ENCODE measurements at regions of chr5 and their contacts with region 1.

Region 1: GRCh38 chr5:132007399-132008165 is 3.9 kb downstream of the ACSL6 start:
- DNase-seq: peak; percentile 62 to 71 (median 66)
- H3K4me3 ChIP-seq: no peak overlapping the region
- H3K4me3 Mint-ChIP-seq: peak overlapping the region in 1 of 8 donors; percentile 53
- H3K27ac ChIP-seq: no peak overlapping the region
- H3K27ac Mint-ChIP-seq: peak overlapping the region in 5 of 7 donors; percentile 6 to 83 (median 32)
- H3K4me1 ChIP-seq: peaks cover 32% of the 10 kb centered on the region
- H3K4me1 Mint-ChIP-seq: peaks cover 21 to 53% (median 37%) of the 10 kb centered on the region in 4 donors
- H3K27me3 ChIP-seq: no peaks in the 10 kb centered on the region
- H3K27me3 Mint-ChIP-seq: peaks cover 0 to 4% of the 10 kb centered on the region in 2 donors

Region 2: GRCh38 chr5:131423056-131423455 is 584.5 kb before region 1 on chr5:
- CTCF ChIA-PET with region 1: interaction called, 5 read pairs
- POLR2A ChIA-PET with region 1: no interaction called
- intact Hi-C with region 1: loop called (anchors 1 kb)
- DNase-seq: no peak
- H3K4me3 ChIP-seq: no peak overlapping the region
- H3K4me3 Mint-ChIP-seq: no peak overlapping the region
- H3K27ac ChIP-seq: no peak overlapping the region
- H3K27ac Mint-ChIP-seq: peak overlapping the region in 6 of 7 donors; percentile 15 to 85 (median 60)
- H3K4me1 ChIP-seq: peaks cover 6% of the 10 kb centered on the region
- H3K4me1 Mint-ChIP-seq: peaks cover 9 to 18% (median 11%) of the 10 kb centered on the region in 4 donors
- H3K27me3 ChIP-seq: no peaks in the 10 kb centered on the region
- H3K27me3 Mint-ChIP-seq: no peaks in the 10 kb centered on the region

Region 3: DNA sequence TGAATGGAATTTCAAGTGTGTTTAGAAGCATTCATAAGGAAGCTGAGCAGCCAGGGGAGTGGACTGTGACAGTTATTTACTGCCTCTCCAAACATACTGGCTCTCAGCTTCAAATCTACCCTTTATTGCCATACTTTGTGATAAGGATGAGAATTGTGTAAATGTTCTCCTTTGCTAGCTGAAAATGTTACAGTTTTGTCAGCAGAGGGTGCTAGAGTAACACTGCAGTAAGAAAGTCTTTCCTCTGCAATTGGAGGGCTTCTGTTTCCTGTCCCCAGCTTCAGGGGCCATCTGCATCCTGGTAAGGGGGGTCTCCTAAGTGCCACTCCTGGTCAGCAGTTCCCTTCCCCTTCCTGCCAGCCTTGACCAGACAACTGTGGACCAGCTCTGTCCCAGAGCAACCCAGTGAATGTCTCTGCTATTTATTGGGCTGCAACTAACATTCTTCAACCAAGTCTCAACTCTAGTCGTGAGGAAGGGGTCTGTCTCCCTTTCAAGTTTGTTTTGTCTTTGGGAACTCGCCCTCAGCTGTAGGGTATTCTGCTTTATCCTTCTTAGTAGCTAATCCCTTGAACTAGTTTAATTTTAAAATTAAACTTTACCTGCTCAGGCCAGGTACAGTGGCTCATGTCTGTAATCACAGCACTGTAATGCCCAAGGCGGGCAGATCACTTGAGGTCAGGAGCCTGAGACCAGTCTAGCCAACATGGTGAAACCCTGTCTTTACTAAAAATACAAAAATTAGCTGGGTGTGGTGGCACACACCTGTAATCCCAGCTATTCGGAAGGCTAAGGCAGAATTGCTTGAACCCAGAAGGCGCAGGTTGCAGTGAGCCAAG is 417.9 kb before region 1 on chr5:
- CTCF ChIA-PET with region 1: interaction called, 394 read pairs
- POLR2A ChIA-PET with region 1: interaction called, 31 read pairs
- intact Hi-C with region 1: loop called (anchors 1 kb)
- DNase-seq: peak in 4 of 5 donors; percentile 56 to 60 (median 58)
- H3K4me3 ChIP-seq: no peak overlapping the region
- H3K4me3 Mint-ChIP-seq: no peak overlapping the region
- H3K27ac ChIP-seq: no peak overlapping the region
- H3K27ac Mint-ChIP-seq: peak overlapping the region in 4 of 7 donors; percentile 22 to 77 (median 52)
- H3K4me1 ChIP-seq: peaks cover 17% of the 10 kb centered on the region
- H3K4me1 Mint-ChIP-seq: peaks cover 21 to 58% (median 32%) of the 10 kb centered on the region in 4 donors
- H3K27me3 ChIP-seq: no peaks in the 10 kb centered on the region
- H3K27me3 Mint-ChIP-seq: no peaks in the 10 kb centered on the region

Region 4: DNA sequence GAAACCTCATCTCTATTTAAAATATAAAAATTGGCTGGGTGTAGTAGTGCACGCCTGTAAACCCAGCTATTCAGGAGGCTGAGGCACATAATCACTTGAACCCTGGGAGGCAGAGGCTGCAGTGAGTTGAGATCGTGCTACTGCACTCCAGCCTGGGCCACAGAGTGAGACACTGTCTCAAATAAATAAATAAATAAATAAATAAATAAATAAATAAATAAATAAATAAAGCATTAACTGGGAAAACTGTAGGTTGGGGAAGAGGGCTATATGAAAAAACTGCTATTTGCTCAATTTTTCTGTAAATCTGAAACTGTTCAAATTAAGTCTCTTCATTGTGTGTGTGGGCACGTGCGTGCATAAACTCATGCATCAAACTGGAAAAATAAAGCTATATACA is 312.7 kb before region 1 on chr5:
- CTCF ChIA-PET with region 1: interaction called, 15 read pairs
- POLR2A ChIA-PET with region 1: no interaction called
- intact Hi-C with region 1: no loop called
- DNase-seq: no peak
- H3K4me3 ChIP-seq: no peak overlapping the region
- H3K4me3 Mint-ChIP-seq: no peak overlapping the region
- H3K27ac ChIP-seq: no peak overlapping the region
- H3K27ac Mint-ChIP-seq: no peak overlapping the region
- H3K4me1 ChIP-seq: no peaks in the 10 kb centered on the region
- H3K4me1 Mint-ChIP-seq: peaks cover 0 to 5% (median 2%) of the 10 kb centered on the region in 4 donors
- H3K27me3 ChIP-seq: no peaks in the 10 kb centered on the region
- H3K27me3 Mint-ChIP-seq: no peaks in the 10 kb centered on the region

Region 5: DNA sequence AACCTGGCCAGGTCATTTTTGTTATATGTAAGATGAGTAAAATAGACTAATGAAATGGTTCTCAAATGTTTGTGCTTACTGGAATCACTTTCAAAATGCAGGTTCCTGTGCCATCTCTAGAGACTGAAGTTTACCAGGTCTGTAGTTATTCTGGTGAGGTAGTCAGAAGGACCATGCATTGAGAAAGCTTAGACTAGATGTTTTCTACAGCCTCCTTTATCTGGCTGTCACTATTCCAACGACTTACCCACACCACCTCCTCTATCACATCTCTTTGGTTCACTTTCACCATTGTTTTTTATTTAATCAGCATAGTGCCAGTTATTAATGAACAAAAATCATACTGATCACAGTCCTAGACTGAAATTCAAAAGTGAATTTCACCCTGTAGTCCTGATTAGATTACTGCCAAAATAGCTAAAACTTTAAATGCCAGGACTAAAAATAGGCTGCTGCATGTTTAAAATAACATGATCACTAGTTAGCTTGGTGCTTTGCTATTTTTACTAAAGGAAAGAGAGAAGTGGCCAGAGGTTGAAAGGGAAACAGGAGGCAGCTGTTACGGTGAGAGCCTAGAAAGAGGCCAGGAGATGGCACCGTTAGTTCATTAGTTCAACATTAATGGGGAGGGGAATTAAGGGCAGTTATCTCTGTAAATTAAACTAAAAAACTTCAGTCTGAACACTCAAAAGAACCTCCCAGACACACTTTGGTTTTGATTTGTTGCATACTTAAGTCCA is 196.9 kb before region 1 on chr5:
- CTCF ChIA-PET with region 1: interaction called, 67 read pairs
- POLR2A ChIA-PET with region 1: no interaction called
- intact Hi-C with region 1: loop called (anchors 1 kb)
- DNase-seq: peak in 4 of 5 donors; percentile 16 to 27 (median 22)
- H3K4me3 ChIP-seq: no peak overlapping the region
- H3K4me3 Mint-ChIP-seq: no peak overlapping the region
- H3K27ac ChIP-seq: no peak overlapping the region
- H3K27ac Mint-ChIP-seq: peak overlapping the region in 1 of 7 donors; percentile 33
- H3K4me1 ChIP-seq: no peaks in the 10 kb centered on the region
- H3K4me1 Mint-ChIP-seq: peaks cover 0 to 4% (median 0%) of the 10 kb centered on the region in 4 donors
- H3K27me3 ChIP-seq: no peaks in the 10 kb centered on the region
- H3K27me3 Mint-ChIP-seq: no peaks in the 10 kb centered on the region

Region 6: DNA sequence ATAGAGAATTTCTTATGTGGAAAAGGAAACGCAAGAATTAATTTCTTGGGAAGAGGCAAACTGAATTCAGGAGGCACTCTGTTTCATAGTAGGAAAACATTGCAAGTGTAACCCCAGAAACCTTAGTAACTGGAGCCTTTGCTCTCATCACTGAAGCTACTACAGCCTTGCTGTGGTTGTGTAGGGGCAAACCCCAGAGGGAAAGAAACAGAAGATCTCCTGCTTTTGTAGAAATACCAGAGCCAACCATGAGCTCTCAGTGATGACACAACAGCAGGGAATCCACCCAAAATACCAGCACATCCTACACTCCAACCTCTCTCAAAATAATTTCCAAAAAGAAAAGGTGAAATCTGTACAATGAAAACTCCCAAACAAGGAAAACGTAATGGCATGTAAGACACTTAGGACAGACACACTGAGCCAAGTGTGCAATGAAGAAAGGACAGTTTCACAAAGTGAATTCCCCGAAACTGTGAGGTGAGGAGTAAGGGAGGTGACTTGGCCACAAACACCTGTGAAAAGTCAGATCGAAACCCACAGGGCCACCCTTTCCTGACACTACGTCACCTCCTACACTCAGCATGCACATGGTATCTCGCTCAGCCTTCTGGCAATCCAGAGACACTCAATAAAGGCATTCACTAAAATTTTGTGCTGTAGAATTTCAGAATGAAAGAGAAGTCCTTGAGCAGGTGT is 12.4 kb after region 1 on chr5:
- CTCF ChIA-PET with region 1: interaction called, 19 read pairs
- POLR2A ChIA-PET with region 1: interaction called, 3 read pairs
- intact Hi-C with region 1: no loop called
- DNase-seq: peak; percentile 80 to 92 (median 82)
- H3K4me3 ChIP-seq: no peak overlapping the region
- H3K4me3 Mint-ChIP-seq: peak overlapping the region; percentile 4 to 77 (median 74)
- H3K27ac ChIP-seq: peak overlapping the region; percentile 67
- H3K27ac Mint-ChIP-seq: peak overlapping the region; percentile 90 to 99 (median 97)
- H3K4me1 ChIP-seq: peaks cover 52% of the 10 kb centered on the region
- H3K4me1 Mint-ChIP-seq: peaks cover 35 to 58% (median 44%) of the 10 kb centered on the region in 4 donors
- H3K27me3 ChIP-seq: no peaks in the 10 kb centered on the region
- H3K27me3 Mint-ChIP-seq: no peaks in the 10 kb centered on the region

Region 7: DNA sequence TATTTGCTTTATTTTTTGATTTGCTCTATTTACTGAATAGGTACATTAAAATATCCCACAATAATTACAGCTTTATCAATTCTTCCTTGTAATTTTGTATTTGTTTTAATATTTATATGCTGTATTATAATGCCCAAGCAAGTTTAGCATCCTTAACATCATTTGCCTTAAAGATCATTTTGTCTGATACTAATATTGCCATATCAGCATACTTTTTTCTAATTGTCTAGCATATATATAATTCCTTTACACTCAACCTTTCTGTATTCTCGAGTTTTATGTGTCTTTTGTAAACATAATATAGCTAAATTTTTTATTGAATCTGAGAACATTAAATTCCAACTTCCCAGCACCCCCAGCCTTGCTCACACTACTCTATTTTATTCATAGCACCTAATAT is 155.4 kb after region 1 on chr5:
- CTCF ChIA-PET with region 1: no interaction called
- POLR2A ChIA-PET with region 1: no interaction called
- intact Hi-C with region 1: no loop called
- DNase-seq: no peak
- H3K4me3 ChIP-seq: no peak overlapping the region
- H3K4me3 Mint-ChIP-seq: no peak overlapping the region
- H3K27ac ChIP-seq: no peak overlapping the region
- H3K27ac Mint-ChIP-seq: no peak overlapping the region
- H3K4me1 ChIP-seq: no peaks in the 10 kb centered on the region
- H3K4me1 Mint-ChIP-seq: peaks cover 0 to 5% (median 2%) of the 10 kb centered on the region in 4 donors
- H3K27me3 ChIP-seq: no peaks in the 10 kb centered on the region
- H3K27me3 Mint-ChIP-seq: peaks cover 0 to 3% of the 10 kb centered on the region in 2 donors

Region 8: GRCh38 chr5:133316427-133316826 is 1308.8 kb after region 1 on chr5:
- CTCF ChIA-PET with region 1: no interaction called
- POLR2A ChIA-PET with region 1: no interaction called
- intact Hi-C with region 1: no loop called
- DNase-seq: no peak
- H3K4me3 ChIP-seq: no peak overlapping the region
- H3K4me3 Mint-ChIP-seq: no peak overlapping the region
- H3K27ac ChIP-seq: no peak overlapping the region
- H3K27ac Mint-ChIP-seq: no peak overlapping the region
- H3K4me1 ChIP-seq: no peaks in the 10 kb centered on the region
- H3K4me1 Mint-ChIP-seq: peaks cover 0 to 4% (median 2%) of the 10 kb centered on the region in 4 donors
- H3K27me3 ChIP-seq: no peaks in the 10 kb centered on the region
- H3K27me3 Mint-ChIP-seq: peaks cover 0 to 4% of the 10 kb centered on the region in 2 donors